IMR-90 (cell line): ENCODE measurements at regions of chrX and their contacts with region 1.

Region 1: GRCh38 chrX:72572248-72573157 is at the start of gene HDAC8:
- DNase-seq: peak; percentile 86
- ATAC-seq: peak; percentile 89
- H3K4me3 ChIP-seq: peak within 1 kb of the TSS; percentile 90
- H3K27ac ChIP-seq: peak within 1 kb of the TSS; percentile 83
- H3K4me1 ChIP-seq: no peaks in the 10 kb centered on the region
- H3K27me3 ChIP-seq: peaks cover 5% of the 10 kb centered on the region
- CTCF ChIP-seq: no peak
- POLR2A ChIP-seq: no peak
- RAD21 ChIP-seq: no peak
- total RNA-seq, gene HDAC8: 28.5 and 30.8 TPM in 2 replicates

Region 2: DNA sequence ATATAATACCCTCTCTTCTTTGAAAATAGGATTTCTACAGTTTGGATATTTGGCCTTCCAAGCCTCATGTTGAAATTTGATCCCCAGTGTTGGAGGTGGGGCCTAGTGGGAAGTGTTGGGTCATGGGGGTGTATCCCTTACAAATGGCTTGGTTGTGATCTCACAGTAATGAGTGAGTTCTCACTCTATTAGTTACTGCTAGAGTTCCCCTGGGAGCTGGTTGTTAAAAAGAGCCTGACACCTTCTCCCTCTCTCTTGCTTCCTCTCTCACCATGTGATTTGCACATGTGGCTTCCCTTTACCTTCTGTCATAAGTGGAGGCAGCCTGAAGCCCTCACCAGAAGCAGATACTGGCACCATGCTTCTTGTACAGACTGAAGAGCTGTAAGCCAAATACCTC is 73.7 kb before region 1 on chrX:
- CTCF ChIA-PET with region 1: no interaction called
- POLR2A ChIA-PET with region 1: no interaction called
- dilution Hi-C with region 1: no loop called
- in situ Hi-C with region 1: no loop called
- intact Hi-C with region 1: no loop called
- DNase-seq: no peak
- ATAC-seq: no peak
- H3K4me3 ChIP-seq: no peak overlapping the region
- H3K27ac ChIP-seq: no peak overlapping the region
- H3K4me1 ChIP-seq: no peaks in the 10 kb centered on the region
- H3K27me3 ChIP-seq: peaks cover 2% of the 10 kb centered on the region
- CTCF ChIP-seq: no peak
- POLR2A ChIP-seq: no peak
- RAD21 ChIP-seq: no peak

Region 3: GRCh38 chrX:72554448-72555140 is 17.9 kb before region 1 on chrX:
- CTCF ChIA-PET with region 1: interaction called, 5 read pairs
- POLR2A ChIA-PET with region 1: interaction called, 14 read pairs
- dilution Hi-C with region 1: no loop called
- in situ Hi-C with region 1: no loop called
- intact Hi-C with region 1: no loop called
- DNase-seq: no peak
- ATAC-seq: no peak
- H3K4me3 ChIP-seq: no peak overlapping the region
- H3K27ac ChIP-seq: no peak overlapping the region
- H3K4me1 ChIP-seq: no peaks in the 10 kb centered on the region
- H3K27me3 ChIP-seq: no peaks in the 10 kb centered on the region; the same call in 1 of the 2 replicates
- CTCF ChIP-seq: no peak
- POLR2A ChIP-seq: no peak
- RAD21 ChIP-seq: no peak